ENCODE measurements at regions of chr12 and their contacts with region 1.

Region 1: GRCh38 chr12:6764011-6764828 is 1.9 kb upstream of the PTMS start:
- DNase-seq: peak; percentile 91 to 94
- H3K4me3 ChIP-seq: peak overlapping the region in 2 of 4 experiments; percentile 6 to 98; a peak in 4 of 8 replicates
- H3K27ac ChIP-seq: peak overlapping the region; percentile 77
- H3K4me1 ChIP-seq: peaks cover 8 to 21% (median 14%) of the 10 kb centered on the region in 4 experiments
- H3K27me3 ChIP-seq: no peaks in the 10 kb centered on the region
- CTCF ChIP-seq: no peak
- EP300 ChIP-seq: peak in 1 of 2 experiments; percentile 57; a peak in 1 of 3 replicates
- POLR2A ChIP-seq: peak in 1 of 2 experiments; percentile 33; a peak in 1 of 3 replicates
- RAD21 ChIP-seq: no peak

Region 2: DNA sequence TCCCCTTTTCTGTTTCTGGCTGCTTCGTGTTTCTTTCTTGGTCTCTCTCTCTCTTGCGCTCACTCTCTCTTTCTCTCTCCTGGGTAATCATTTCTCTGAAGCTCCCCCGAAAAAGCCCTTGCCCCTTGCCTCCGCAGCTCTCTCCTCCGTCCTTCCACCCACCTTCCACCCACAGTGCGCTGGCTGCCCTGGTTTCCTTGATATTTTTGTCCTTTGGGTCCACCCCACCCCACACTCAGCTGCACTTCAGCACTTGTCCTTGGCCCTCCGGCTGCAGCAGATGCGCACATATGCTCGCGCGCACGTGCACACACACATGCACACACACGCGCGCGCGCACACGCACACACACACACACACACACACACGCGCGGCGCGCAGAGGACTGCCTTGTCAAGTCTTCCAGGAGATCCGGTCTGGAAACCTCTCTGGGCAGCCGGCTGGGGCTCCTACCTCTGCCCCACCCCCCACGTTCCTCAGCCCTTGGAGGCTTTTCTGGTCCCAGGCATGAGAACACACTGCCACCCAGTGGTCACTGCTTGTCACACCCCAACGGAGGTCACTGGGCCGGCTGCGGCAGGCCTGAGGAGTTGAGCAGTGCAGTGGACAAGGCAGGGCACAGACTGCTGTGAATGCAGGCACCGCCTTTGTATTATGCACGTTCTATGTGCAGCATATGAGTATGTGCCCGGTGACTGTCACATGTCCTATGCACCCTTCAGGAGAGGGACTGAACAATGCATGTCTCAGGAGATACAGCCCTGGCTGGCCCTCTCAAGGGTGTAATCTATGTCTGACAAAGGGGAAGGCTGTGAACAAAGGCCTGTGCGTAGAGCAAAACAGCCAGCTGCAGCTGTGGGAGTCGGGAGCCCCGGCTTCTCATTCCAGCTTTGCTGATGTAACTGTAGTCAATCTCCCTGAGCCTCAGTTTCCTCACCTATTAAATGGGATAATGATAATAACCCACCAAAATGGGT is 14.6 kb after region 1 on chr12:
- CTCF ChIA-PET with region 1: interaction called, 427 read pairs
- POLR2A ChIA-PET with region 1: interaction called, 97 read pairs
- DNase-seq: peak; percentile 82 to 96
- H3K4me3 ChIP-seq: peak overlapping the region; percentile 29 to 67 (median 54)
- H3K27ac ChIP-seq: no peak overlapping the region
- H3K4me1 ChIP-seq: peaks cover 5 to 18% (median 13%) of the 10 kb centered on the region in 4 experiments
- H3K27me3 ChIP-seq: peaks cover 0 to 23% (median 17%) of the 10 kb centered on the region in 4 experiments; a peak in 5 of 7 replicates
- CTCF ChIP-seq: peak in 2 of 3 experiments; percentile 95 to 98; a peak in 3 of 4 replicates
- EP300 ChIP-seq: peak in 1 of 2 experiments; percentile 17; a peak in 1 of 3 replicates
- POLR2A ChIP-seq: no peak
- RAD21 ChIP-seq: peak; percentile 96 to 99

Region 3: GRCh38 chr12:6792522-6793201 is 28.4 kb after region 1 on chr12:
- CTCF ChIA-PET with region 1: interaction called, 4 read pairs
- POLR2A ChIA-PET with region 1: interaction called, 13 read pairs
- DNase-seq: no peak
- H3K4me3 ChIP-seq: no peak overlapping the region
- H3K27ac ChIP-seq: no peak overlapping the region
- H3K4me1 ChIP-seq: peaks cover 0 to 9% (median under 1%) of the 10 kb centered on the region in 4 experiments; a peak in 3 of 7 replicates
- H3K27me3 ChIP-seq: 0 out of 7 replicates have a peak, but pooled peaks cover 0 to 3% (median 0%) of the 10 kb centered on the region in 4 experiments
- CTCF ChIP-seq: no peak
- EP300 ChIP-seq: no peak
- POLR2A ChIP-seq: no peak
- RAD21 ChIP-seq: no peak

Region 4: GRCh38 chr12:6851921-6852650 is 87.9 kb after region 1 on chr12 and contains the start of gene USP5:
- CTCF ChIA-PET with region 1: no interaction called
- POLR2A ChIA-PET with region 1: interaction called, 12 read pairs
- DNase-seq: peak; percentile 94 to 99
- H3K4me3 ChIP-seq: peak within 1 kb of the TSS; percentile 79 to 94 (median 88)
- H3K27ac ChIP-seq: peak within 1 kb of the TSS; percentile 77; the same call in 1 of the 2 replicates
- H3K4me1 ChIP-seq: peaks cover 0 to 14% (median 3%) of the 10 kb centered on the region in 4 experiments; a peak in 5 of 7 replicates
- H3K27me3 ChIP-seq: no peaks in the 10 kb centered on the region
- CTCF ChIP-seq: no peak
- EP300 ChIP-seq: no peak
- POLR2A ChIP-seq: peak in 1 of 2 experiments; percentile 79; a peak in 2 of 3 replicates
- RAD21 ChIP-seq: no peak
- total RNA-seq, gene USP5: 148 and 159 TPM in 2 replicates

Measured in H1 (cell line).